ENCODE measurements at regions of chr6 and their contacts with region 1.

Region 1: DNA sequence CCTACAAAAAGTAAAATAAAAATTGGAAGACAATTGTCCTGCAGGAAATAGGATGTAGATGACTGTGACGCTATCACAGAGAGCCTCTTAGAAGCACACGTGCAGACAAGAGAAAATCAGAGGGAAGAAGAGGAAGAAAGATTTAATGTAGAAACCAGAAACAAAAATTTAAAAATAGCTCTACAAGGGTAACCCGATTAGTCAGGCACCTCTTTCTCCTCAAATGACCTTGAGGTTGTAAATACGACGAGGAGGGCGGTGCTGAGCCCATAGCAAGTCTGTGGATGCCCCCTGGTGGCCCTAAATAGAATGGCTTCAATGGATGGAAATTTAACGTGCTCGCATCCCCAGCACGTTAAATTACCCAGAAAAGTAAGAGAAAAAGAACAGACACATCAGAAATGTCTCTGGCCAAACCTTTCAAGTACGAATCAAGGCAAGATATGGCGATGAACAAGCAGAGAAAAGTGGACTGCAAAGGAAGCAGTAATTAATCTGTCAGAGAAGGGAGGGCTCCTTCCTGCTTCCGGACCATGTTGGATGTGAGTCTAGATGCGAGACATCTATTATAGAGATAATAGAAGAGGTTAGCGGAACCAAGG is 4.2 kb upstream of the PRPH2 start:
- DNase-seq: peak; percentile 80
- H3K4me3 Mint-ChIP-seq: peak overlapping the region; percentile 70
- H3K27ac Mint-ChIP-seq: peak overlapping the region; percentile 97
- H3K4me1 Mint-ChIP-seq: peaks cover 24% of the 10 kb centered on the region
- H3K27me3 Mint-ChIP-seq: peaks cover 3% of the 10 kb centered on the region

Region 2: DNA sequence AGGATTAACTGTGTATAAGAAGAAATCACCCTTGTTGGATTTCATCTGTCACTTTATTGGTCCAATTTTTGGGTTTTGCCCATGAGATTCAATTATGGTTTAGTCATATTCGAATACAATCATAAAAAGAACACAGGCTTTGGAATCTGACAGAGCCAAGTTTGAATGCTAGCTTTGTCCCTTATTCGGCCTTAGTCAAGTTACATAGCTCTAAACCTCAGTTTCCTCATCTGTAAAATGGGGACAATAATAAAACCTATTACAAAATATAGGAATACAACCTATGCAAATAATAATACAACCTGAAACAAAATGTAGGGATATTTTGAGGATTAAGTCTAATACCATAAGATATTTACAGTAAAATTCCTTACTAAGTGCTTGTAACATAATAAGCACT is 61.9 kb before region 1 on chr6:
- CTCF ChIA-PET with region 1: interaction called, 12 read pairs
- POLR2A ChIA-PET with region 1: no interaction called
- DNase-seq: no peak
- H3K4me3 Mint-ChIP-seq: no peak overlapping the region
- H3K27ac Mint-ChIP-seq: no peak overlapping the region
- H3K4me1 Mint-ChIP-seq: no peaks in the 10 kb centered on the region
- H3K27me3 Mint-ChIP-seq: no peaks in the 10 kb centered on the region

Region 3: GRCh38 chr6:42674780-42675179 is 51.8 kb before region 1 on chr6:
- CTCF ChIA-PET with region 1: interaction called, 4 read pairs
- POLR2A ChIA-PET with region 1: interaction called, 10 read pairs
- DNase-seq: no peak
- H3K4me3 Mint-ChIP-seq: no peak overlapping the region
- H3K27ac Mint-ChIP-seq: no peak overlapping the region
- H3K4me1 Mint-ChIP-seq: no peaks in the 10 kb centered on the region
- H3K27me3 Mint-ChIP-seq: no peaks in the 10 kb centered on the region

Region 4: DNA sequence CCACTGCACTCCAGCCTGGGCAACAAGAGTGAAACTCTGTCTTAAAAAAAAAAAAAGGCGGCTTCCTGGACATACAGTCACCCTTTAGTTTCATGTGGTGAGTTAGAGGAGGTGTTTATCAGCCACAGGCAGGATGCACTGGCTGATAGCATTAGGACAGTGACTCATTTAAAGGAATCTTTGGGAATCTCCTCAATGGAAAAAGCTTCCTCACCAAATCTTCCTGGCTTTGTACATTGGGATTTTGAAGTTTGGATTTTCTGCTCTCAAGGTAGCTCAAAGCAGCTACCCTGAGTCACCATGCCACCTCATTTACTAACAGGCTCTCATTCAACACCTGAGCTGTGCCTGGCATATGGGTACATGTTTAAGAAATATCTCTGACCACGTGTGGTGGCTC is 24.4 kb before region 1 on chr6:
- CTCF ChIA-PET with region 1: interaction called, 10 read pairs
- POLR2A ChIA-PET with region 1: no interaction called
- DNase-seq: no peak
- H3K4me3 Mint-ChIP-seq: no peak overlapping the region
- H3K27ac Mint-ChIP-seq: no peak overlapping the region
- H3K4me1 Mint-ChIP-seq: no peaks in the 10 kb centered on the region
- H3K27me3 Mint-ChIP-seq: no peaks in the 10 kb centered on the region

Region 5: GRCh38 chr6:42745707-42746462 is 19.3 kb after region 1 on chr6 and contains the start of gene TBCC:
- CTCF ChIA-PET with region 1: interaction called, 19 read pairs
- POLR2A ChIA-PET with region 1: no interaction called
- DNase-seq: peak; percentile 97
- H3K4me3 Mint-ChIP-seq: peak within 1 kb of the TSS; percentile 100
- H3K27ac Mint-ChIP-seq: peak within 1 kb of the TSS; percentile 100
- H3K4me1 Mint-ChIP-seq: peaks cover 34% of the 10 kb centered on the region
- H3K27me3 Mint-ChIP-seq: no peaks in the 10 kb centered on the region
- total RNA-seq, gene TBCC: 37.1 to 38.6 TPM

Region 6: GRCh38 chr6:42782622-42783176 is 56.1 kb after region 1 on chr6:
- CTCF ChIA-PET with region 1: no interaction called
- POLR2A ChIA-PET with region 1: no interaction called
- DNase-seq: peak; percentile 74
- H3K4me3 Mint-ChIP-seq: peak overlapping the region; percentile 97
- H3K27ac Mint-ChIP-seq: peak overlapping the region; percentile 100
- H3K4me1 Mint-ChIP-seq: peaks cover 25% of the 10 kb centered on the region
- H3K27me3 Mint-ChIP-seq: no peaks in the 10 kb centered on the region

Measured in activated CD4-positive, alpha-beta T cell treated with anti-CD3 and anti-CD28 coated beads, Interleukin-2, amount 10 ng/mL, durations not matched to agents 7 days and 5 days (primary cell).